ENCODE measurements at regions of chr19 and their contacts with region 1.

Region 1: GRCh38 chr19:32611161-32611560 is 30.2 kb downstream of the PDCD5 start:
- DNase-seq: no peak
- ATAC-seq: no peak
- H3K4me3 ChIP-seq: no peak overlapping the region
- H3K27ac ChIP-seq: no peak overlapping the region
- H3K4me1 ChIP-seq: no peaks in the 10 kb centered on the region
- H3K27me3 ChIP-seq: no peaks in the 10 kb centered on the region
- CTCF ChIP-seq: no peak

Region 2: GRCh38 chr19:32580901-32581703 is 30.1 kb before region 1 on chr19 and contains the start of gene PDCD5:
- CTCF ChIA-PET with region 1: no interaction called
- POLR2A ChIA-PET with region 1: no interaction called
- intact Hi-C with region 1: no loop called
- DNase-seq: peak; percentile 88
- ATAC-seq: peak; percentile 94
- H3K4me3 ChIP-seq: peak within 1 kb of the TSS; percentile 95
- H3K27ac ChIP-seq: no peak within 1 kb of the TSS
- H3K4me1 ChIP-seq: peaks cover 7% of the 10 kb centered on the region; the same call in 1 of the 2 replicates
- H3K27me3 ChIP-seq: no peaks in the 10 kb centered on the region
- CTCF ChIP-seq: no peak
- total RNA-seq, gene PDCD5: 165 and 203 TPM in 2 replicates

Region 3: DNA sequence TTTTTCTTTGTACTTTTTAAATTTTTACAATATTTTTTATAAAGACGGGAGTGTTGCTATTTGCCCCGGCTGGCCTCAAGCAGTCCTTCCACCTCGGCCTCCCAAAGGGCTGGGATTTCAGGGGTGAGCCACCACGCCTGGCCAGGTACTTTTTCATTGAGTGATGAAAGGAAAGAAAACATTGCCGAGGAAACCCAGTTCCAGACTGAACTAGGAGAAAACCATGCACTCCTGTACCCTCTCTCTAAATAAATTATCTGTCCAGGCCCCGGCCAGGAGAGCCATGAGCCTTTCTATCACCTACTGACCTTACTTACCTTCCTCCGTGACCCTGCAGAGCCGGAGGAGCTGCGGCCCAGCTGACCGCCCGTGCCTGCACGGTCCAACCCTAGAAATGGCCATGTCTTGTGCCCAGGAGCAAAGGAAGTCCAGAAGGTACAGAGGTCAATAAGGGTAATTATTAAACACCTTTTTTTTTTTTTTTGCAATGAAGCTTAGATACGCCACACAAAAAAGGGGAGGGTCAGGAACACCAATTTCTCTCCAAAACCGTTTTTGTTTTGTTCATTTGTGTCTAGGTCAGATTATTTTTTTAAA is 258.3 kb after region 1 on chr19 and contains the start of gene SLC7A9:
- CTCF ChIA-PET with region 1: no interaction called
- POLR2A ChIA-PET with region 1: interaction called, 30 read pairs
- intact Hi-C with region 1: no loop called
- DNase-seq: no peak
- ATAC-seq: no peak
- H3K4me3 ChIP-seq: no peak within 1 kb of the TSS
- H3K27ac ChIP-seq: no peak within 1 kb of the TSS
- H3K4me1 ChIP-seq: no peaks in the 10 kb centered on the region
- H3K27me3 ChIP-seq: no peaks in the 10 kb centered on the region
- CTCF ChIP-seq: no peak
- total RNA-seq, gene SLC7A9: not detected in 2 replicates

Measured in PC-3 (cell line).